ENCODE measurements at regions of chr3 and their contacts with region 1.

Region 1: GRCh38 chr3:172622916-172623700 is 87.8 kb downstream of the NCEH1 start:
- DNase-seq: peak; percentile 44 to 68 (median 62)
- H3K4me3 ChIP-seq: no peak overlapping the region
- H3K27ac ChIP-seq: no peak overlapping the region
- H3K4me1 ChIP-seq: peaks cover 0 to 7% (median 0%) of the 10 kb centered on the region in 4 experiments
- H3K27me3 ChIP-seq: no peaks in the 10 kb centered on the region

Region 2: DNA sequence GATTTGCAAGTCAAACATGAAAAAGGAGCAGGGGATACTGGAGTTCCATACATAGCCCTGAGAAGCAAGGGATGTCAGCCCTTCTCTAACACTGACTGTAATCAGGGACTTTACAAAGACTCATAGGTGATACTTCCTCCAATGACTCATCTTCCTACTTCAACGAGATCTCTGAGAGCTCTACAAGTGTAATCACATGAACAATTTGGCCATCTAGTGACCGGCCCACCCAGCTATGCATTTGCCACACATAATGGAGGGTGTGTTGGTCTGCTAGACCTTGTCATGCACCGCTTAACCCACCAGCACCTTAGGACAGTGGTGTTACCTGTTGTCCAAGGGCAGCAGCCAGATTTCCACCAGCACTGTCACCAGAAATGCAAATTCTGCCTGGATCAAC is 12.5 kb after region 1 on chr3:
- CTCF ChIA-PET with region 1: interaction called, 22 read pairs
- POLR2A ChIA-PET with region 1: no interaction called
- DNase-seq: no peak
- H3K4me3 ChIP-seq: no peak overlapping the region
- H3K27ac ChIP-seq: no peak overlapping the region
- H3K4me1 ChIP-seq: no peaks in the 10 kb centered on the region
- H3K27me3 ChIP-seq: no peaks in the 10 kb centered on the region